Testis (tissue), 5 donors: ENCODE measurements at regions of chr1 and their contacts with region 1.

Region 1: DNA sequence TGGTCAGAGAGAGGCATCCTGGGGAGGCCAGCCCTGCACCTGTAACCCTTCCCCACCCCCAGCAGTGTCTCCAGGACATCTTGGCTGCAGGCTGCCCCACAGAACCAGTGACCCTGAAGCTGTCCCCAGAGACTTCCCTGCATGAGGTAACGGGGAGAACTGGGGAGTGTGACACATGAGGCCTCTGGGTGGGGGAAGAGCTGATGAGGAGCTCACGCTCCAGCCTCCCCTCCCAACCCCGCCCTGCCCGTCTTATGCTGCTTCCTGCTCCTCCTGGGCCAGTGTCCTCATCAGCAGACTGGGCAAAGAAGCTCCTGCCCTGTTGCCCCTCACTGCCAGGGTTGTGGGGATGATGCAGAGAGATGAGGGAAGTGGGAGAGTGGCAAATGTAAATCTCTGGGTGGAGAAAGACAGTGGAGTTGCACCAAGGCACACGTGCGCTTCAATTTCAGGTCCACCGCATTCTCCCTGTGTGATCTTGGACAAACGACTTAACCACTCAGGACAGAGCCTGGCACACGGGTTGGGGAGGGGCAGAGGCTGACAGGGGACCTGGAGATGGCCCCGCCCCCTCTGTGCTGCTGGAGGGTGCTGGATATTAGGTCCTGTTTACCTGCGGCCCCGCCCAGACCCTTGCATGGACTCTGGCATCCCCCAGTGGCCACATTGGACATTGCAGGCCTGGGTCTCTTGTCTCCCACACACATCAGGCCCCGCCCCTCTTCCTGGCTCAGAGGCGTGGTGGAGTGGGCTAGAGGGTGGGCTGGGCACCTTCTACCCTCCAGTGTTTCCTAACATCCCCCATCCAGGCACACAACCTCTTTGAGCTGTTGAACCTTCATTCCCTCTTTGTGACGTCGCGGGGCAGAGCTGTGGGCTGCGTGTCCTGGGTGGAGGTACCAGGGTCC is 12.3 kb downstream of the CLCNKB start:
- DNase-seq: peak; percentile 92
- H3K4me3 ChIP-seq: no peak overlapping the region
- H3K27ac ChIP-seq: no peak overlapping the region
- H3K4me1 ChIP-seq: peaks cover 6% of the 10 kb centered on the region
- H3K27me3 ChIP-seq: no peaks in the 10 kb centered on the region
- CTCF ChIP-seq: peak; percentile 85 to 95 (median 88)
- POLR2A ChIP-seq: no peak

Region 2: DNA sequence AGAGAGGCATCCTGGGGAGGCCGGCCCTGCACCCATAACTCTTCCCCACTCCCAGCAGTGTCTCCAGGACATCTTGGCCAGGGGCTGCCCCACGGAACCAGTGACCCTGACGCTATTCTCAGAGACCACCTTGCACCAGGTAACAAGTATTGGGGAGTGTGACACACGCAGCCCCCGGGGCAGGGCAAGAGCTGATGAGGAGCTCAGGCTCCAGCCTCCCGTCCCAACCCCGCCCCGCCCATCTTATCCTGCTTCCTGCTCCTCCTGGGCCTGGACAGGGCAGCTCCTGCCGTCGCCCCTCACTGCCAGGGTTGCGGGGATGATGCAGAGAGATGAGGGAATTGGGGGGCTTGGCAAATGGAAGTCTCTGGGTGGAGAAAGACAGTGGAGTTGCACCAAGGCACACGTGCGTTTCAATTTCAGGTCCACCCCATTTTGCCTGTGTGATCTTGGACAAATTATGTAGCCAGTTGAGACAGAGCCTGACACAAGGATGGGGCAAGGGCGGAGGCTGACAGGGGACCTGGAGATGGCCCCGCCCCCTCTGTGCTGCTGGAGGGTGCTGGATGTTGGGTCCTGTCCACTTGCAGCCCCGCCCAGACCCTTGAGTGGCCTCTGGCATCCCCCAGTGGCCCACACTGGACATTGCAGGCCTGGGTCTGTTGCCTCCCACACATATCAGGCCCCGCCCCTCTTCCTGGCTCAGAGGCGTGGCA is 23.3 kb before region 1 on chr1:
- intact Hi-C with region 1: loop called (anchors 1 kb)
- DNase-seq: peak; percentile 87
- H3K4me3 ChIP-seq: no peak overlapping the region
- H3K27ac ChIP-seq: no peak overlapping the region
- H3K4me1 ChIP-seq: no peaks in the 10 kb centered on the region
- H3K27me3 ChIP-seq: no peaks in the 10 kb centered on the region
- CTCF ChIP-seq: peak; percentile 92 to 94 (median 92)
- POLR2A ChIP-seq: no peak